ENCODE measurements at regions of chr2 and their contacts with region 1.

Region 1: DNA sequence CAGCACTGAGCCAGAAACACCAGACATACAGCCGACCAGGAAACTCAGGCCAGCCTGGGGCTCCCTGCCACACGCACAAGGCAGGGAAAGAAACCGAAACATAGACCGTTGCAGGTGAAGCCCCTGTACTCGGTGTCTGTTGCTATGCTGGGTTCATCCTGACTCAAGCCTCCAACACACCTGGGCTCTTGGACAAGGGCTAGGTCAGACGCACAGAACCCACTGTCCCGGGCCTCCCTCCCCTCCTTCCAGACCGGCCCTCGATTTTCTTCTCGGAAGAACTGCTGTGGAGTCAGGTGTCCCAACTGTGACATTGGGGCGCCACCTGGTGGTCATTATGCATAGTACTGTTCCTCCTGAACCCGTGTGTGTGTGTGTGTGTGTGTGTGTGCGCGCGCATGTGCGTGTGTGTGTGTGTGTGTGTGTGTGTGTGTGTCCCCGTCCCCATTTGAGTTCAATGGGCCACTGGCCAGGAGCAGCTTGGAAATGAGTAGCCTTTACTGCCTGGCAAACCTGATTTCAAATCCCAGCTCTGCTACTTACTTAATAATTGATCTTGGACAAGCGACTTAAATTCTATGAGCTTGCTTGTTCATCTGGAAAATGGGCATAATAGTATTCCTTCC is 55.4 kb upstream of the GLI2 start:
- DNase-seq: peak; percentile 76 to 93 (median 89)
- H3K4me3 ChIP-seq: no peak overlapping the region
- H3K27ac ChIP-seq: no peak overlapping the region
- H3K4me1 ChIP-seq: no peaks in the 10 kb centered on the region
- H3K27me3 ChIP-seq: peaks cover 3% of the 10 kb centered on the region
- CTCF ChIP-seq: peak; percentile 48 to 97 (median 74)
- POLR2A ChIP-seq: no peak

Region 2: DNA sequence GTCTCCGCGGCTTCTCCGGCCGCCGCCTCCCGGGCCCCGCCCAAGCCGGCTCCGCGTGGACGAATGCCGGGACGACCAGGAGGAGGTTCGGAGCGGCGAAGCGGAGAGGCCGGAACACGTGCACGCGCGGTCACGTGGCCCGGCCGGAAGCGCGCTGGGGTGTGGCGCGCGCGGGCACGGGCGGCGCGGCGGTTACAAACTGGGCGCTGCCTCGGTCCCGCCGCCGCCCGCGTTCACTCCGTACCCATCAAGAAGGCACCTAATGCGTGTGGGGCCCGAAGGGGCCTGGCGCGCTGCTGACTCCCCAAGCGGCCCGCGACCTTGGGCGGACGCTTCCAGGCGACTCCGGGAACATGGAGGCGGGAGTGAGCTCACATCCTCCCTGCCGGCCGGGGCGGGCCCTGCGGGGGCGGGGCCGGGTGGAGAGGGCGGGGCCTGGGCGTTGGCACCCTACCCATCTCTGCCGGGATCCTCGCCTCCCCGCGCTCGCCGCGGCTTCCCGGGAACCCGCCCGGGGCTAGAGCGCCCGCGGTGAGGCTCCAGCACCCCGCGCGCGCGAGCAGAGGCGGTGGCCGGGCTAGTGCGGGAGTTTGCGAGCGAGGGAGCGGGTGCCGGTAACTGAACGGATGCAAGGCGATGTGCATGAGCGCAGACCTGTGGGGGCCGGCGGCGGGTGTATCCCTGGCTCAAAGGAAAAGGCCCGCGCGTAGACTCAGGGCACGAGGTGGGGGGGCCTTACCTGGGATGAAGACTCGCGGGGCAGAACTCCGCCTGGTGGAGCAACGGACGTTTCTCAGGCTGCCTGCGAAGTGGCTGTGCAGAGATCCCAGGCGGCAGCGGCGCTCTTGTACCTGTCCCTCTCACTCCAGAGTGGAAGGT is 457.0 kb before region 1 on chr2 and contains the start of gene TMEM185B:
- intact Hi-C with region 1: no loop called
- DNase-seq: peak; percentile 91 to 95 (median 91)
- H3K4me3 ChIP-seq: peak within 1 kb of the TSS; percentile 43 to 68 (median 48)
- H3K27ac ChIP-seq: peak within 1 kb of the TSS; percentile 60 to 96 (median 91)
- H3K4me1 ChIP-seq: peaks cover 0 to 30% of the 10 kb centered on the region in 2 donors
- H3K27me3 ChIP-seq: no peaks in the 10 kb centered on the region
- CTCF ChIP-seq: peak in 5 of 6 experiments; percentile 6 to 48 (median 35)
- POLR2A ChIP-seq: peak; percentile 45
- total RNA-seq, gene TMEM185B: 12.0 to 33.0 (median 22.8) TPM

Region 3: DNA sequence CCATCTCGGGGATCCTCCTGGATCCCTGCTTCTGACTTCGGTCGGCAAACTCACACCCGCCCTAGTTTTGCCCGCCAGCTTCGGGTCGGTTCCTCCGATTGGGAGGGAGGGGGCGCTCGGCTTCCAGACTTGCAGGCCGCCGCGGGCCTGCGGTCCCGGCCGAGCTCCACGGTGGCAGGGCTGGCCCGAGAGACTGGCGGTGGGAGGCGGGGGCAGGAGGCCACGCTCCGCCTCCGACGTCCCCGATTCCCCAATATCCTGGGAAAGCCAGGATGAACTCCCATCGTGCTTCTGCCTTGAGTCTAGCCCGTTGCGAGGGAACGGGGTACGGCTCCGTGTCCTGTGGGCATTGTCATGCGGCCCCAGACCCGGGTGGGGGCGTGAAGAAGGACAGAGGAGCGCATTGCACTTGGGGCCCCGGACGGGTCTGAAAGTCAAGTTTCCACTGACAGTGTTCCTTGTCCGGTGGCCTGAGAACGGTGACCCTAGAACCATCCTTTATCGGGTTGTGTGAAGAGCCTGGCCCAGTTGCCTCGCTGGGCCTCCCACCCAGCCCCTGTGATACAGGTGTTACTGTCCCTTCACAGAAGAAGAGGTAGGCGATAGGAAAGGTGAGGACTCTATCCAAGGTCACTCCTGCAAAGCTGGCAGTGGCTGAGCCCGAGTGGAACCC is 336.7 kb before region 1 on chr2:
- intact Hi-C with region 1: loop called (anchors 2 to 5 kb)
- DNase-seq: peak; percentile 79 to 89 (median 86)
- H3K4me3 ChIP-seq: peak overlapping the region in 1 of 4 donors; percentile 66
- H3K27ac ChIP-seq: peak overlapping the region in 1 of 5 donors; percentile 70
- H3K4me1 ChIP-seq: peaks cover 22 to 33% of the 10 kb centered on the region in 2 donors
- H3K27me3 ChIP-seq: peaks cover 40% of the 10 kb centered on the region
- CTCF ChIP-seq: peak; percentile 69 to 91 (median 80)
- POLR2A ChIP-seq: no peak

Region 4: DNA sequence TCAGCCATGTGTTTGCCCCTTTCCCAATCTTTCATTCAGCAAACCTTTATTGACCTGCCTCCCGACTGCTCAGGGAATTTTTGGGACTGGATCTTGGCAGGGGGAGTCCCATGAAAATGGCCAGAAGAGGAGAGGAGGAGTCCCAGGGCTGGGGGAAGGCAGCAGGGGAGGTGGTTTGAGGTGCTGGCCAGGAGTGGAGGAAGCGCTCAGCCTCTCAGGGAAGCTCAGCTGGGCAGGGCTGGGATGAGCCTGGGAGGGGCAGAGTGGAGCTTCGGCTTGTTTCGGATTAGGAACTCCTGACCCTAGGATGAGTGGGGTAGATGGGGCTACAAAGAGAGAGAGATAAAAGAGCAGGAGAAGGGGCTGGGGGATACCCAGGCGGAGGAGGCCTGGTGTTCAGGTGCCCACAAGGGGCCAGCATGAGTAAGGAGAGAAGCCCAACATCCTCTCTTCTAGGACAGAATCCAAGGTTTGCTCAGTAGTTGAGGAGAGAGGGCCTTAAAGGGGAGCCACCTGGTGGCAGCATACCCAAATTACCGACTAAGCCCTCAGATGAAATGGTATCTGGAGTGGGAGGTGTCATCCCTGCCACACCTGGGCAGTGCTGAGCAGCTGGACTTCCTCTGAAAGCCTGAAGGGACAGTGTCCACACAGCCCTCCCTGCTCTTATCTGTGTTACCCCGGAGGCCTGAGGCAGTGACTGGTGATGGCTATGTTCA is 243.2 kb before region 1 on chr2:
- intact Hi-C with region 1: loop called in 1 of 2 experiments (anchors 5 kb)
- DNase-seq: peak in 5 of 7 donors; percentile 41 to 65 (median 53)
- H3K4me3 ChIP-seq: no peak overlapping the region
- H3K27ac ChIP-seq: peak overlapping the region in 2 of 5 donors; percentile 54 to 66
- H3K4me1 ChIP-seq: no peaks in the 10 kb centered on the region
- H3K27me3 ChIP-seq: no peaks in the 10 kb centered on the region
- CTCF ChIP-seq: peak in 5 of 6 experiments; percentile 19 to 58 (median 46)
- POLR2A ChIP-seq: no peak

Region 5: DNA sequence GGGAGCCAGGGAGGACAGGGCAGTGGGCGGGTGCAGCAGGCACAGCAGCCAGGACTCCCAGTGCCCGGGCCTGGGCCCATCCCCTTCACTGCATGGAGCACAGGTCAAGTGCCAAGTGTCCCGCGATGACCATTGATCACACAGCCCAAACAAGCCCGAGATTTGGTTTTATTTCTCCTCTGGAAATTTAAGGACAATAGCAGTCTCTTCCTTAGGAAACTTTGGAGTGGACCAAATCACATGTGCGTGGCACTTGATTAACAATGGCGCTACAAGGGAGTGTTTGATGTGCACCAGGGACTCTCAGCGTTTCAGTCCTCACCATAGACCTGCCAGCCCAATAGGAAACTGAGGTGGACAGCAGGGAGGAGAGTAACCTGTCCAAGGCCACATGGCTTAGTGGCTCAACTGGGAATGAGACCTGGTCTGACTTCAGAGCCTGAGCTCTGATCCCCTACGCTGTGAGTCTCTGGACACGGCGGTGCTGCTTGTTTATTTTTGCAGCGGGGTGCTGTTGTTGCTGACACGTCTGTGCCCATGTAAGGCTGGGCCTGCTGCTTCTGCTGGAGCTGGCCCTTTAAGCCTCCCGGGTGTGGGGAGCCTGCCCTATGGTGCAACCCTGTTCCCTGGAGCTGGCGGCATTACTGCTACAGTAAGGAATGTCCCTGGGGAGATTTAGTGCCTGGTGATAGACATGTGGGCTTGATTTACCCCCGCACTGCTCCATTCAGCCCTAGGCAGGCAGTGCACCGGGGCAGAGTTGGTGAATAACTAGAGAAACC is 140.1 kb before region 1 on chr2:
- intact Hi-C with region 1: loop called in 1 of 2 experiments (anchors 10 kb)
- DNase-seq: peak in 6 of 7 donors; percentile 65 to 87 (median 82)
- H3K4me3 ChIP-seq: no peak overlapping the region
- H3K27ac ChIP-seq: peak overlapping the region in 1 of 5 donors; percentile 40
- H3K4me1 ChIP-seq: peaks cover 7 to 11% of the 10 kb centered on the region in 2 donors
- H3K27me3 ChIP-seq: no peaks in the 10 kb centered on the region
- CTCF ChIP-seq: no peak
- POLR2A ChIP-seq: no peak

Region 6: GRCh38 chr2:120552800-120553481 is 127.3 kb before region 1 on chr2:
- intact Hi-C with region 1: loop called in 1 of 2 experiments (anchors 5 kb)
- DNase-seq: peak; percentile 90 to 96 (median 94)
- H3K4me3 ChIP-seq: no peak overlapping the region
- H3K27ac ChIP-seq: peak overlapping the region in 2 of 5 donors; percentile 22 to 56
- H3K4me1 ChIP-seq: peaks cover 23 to 27% of the 10 kb centered on the region in 2 donors
- H3K27me3 ChIP-seq: no peaks in the 10 kb centered on the region
- CTCF ChIP-seq: peak; percentile 73 to 89 (median 88)
- POLR2A ChIP-seq: no peak

Region 7: GRCh38 chr2:120847700-120848321 is 167.6 kb after region 1 on chr2:
- intact Hi-C with region 1: no loop called
- DNase-seq: peak in 3 of 7 donors; percentile 15 to 63 (median 44)
- H3K4me3 ChIP-seq: no peak overlapping the region
- H3K27ac ChIP-seq: peak overlapping the region in 1 of 5 donors; percentile 63
- H3K4me1 ChIP-seq: no peaks in the 10 kb centered on the region
- H3K27me3 ChIP-seq: no peaks in the 10 kb centered on the region
- CTCF ChIP-seq: no peak
- POLR2A ChIP-seq: no peak